ENCODE measurements at regions of chr17 and their contacts with region 1.

Region 1: DNA sequence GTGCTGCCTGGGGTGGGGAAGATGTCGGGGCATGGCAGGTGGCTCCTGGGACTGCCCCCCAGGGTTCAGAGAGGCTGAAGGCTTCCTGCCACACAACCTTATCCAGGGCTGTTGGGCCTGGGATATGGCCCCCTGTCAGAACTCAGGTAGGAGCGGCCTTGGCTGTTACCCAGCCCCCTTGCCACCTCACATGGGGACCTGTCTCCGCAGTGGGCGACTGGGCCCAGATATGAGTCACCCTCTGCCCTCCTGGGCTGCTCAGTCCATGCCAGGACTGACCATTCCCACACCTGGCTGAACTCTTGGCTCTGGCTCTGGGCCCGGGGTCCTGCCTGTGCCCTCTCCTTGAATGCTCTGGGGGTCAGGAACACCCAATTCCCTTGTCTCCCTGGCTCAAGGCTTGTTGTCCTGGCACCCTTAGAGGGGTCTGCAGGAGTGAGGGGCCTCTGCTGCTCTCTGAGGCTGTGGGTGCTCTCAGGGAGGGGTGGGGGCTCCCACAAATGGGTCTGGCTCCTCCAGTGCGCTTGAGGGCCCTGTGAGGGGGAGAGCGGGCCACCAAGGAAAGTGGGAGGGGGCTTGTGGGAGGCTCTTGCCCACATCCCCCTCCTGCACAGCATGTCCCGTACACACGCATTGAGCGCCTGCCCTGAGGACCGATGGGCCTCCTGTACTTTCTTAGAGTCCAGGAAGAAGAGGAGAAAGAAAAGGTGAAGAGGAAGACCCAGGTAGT is 36.0 kb downstream of the LGALS9 start:
- DNase-seq: peak in 1 of 7 donors; percentile 24
- H3K4me3 ChIP-seq: no peak overlapping the region
- H3K27ac ChIP-seq: no peak overlapping the region
- H3K4me1 ChIP-seq: no peaks in the 10 kb centered on the region
- H3K27me3 ChIP-seq: no peaks in the 10 kb centered on the region
- CTCF ChIP-seq: no peak
- POLR2A ChIP-seq: no peak

Region 2: GRCh38 chr17:27856676-27857432 is 189.9 kb after region 1 on chr17:
- intact Hi-C with region 1: loop called in 1 of 2 experiments (anchors 10 kb)
- DNase-seq: no peak
- H3K4me3 ChIP-seq: no peak overlapping the region
- H3K27ac ChIP-seq: no peak overlapping the region
- H3K4me1 ChIP-seq: no peaks in the 10 kb centered on the region
- H3K27me3 ChIP-seq: no peaks in the 10 kb centered on the region
- CTCF ChIP-seq: no peak
- POLR2A ChIP-seq: no peak